Tibial artery (tissue), 4 donors: ENCODE measurements at regions of chrX and their contacts with region 1.

Region 1: GRCh38 chrX:136920001-136920400 is 39.5 kb upstream of the RBMX start:
- DNase-seq: no peak
- H3K4me3 ChIP-seq: no peak overlapping the region
- H3K27ac ChIP-seq: no peak overlapping the region
- H3K4me1 ChIP-seq: no peaks in the 10 kb centered on the region
- H3K27me3 ChIP-seq: no peaks in the 10 kb centered on the region
- CTCF ChIP-seq: no peak

Region 2: DNA sequence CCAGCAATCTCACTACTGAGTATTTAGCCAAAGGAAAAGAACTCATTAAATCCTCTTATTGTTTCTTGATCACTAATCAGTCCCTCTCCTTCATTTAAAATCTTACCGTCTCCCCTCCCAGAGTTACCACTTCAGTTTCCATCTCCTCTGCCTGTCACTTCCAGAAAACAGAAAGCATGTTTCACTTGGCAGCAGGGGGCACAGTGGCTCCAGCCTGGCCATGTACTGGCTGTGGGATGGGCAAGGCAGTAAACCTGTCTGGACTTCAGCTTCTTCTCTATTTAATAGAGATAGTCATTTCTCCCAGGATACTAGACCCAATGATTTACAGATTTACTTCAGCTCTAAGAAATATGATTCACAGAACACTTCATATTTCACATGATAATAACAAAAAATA is 208.9 kb before region 1 on chrX:
- intact Hi-C with region 1: loop called (anchors 5 kb)
- DNase-seq: peak; percentile 28 to 62
- H3K4me3 ChIP-seq: no peak overlapping the region
- H3K27ac ChIP-seq: no peak overlapping the region
- H3K4me1 ChIP-seq: peaks cover 0 to 7% (median 0%) of the 10 kb centered on the region in 4 donors
- H3K27me3 ChIP-seq: no peaks in the 10 kb centered on the region
- CTCF ChIP-seq: peak; percentile 34 to 40

Region 3: GRCh38 chrX:136735601-136736000 is 184.4 kb before region 1 on chrX:
- intact Hi-C with region 1: no loop called
- DNase-seq: no peak
- H3K4me3 ChIP-seq: no peak overlapping the region
- H3K27ac ChIP-seq: no peak overlapping the region
- H3K4me1 ChIP-seq: peaks cover 0 to 8% (median 0%) of the 10 kb centered on the region in 4 donors
- H3K27me3 ChIP-seq: no peaks in the 10 kb centered on the region
- CTCF ChIP-seq: no peak